Prostate gland (tissue), 2 donors: ENCODE measurements at regions of chr11 and their contacts with region 1.

Region 1: DNA sequence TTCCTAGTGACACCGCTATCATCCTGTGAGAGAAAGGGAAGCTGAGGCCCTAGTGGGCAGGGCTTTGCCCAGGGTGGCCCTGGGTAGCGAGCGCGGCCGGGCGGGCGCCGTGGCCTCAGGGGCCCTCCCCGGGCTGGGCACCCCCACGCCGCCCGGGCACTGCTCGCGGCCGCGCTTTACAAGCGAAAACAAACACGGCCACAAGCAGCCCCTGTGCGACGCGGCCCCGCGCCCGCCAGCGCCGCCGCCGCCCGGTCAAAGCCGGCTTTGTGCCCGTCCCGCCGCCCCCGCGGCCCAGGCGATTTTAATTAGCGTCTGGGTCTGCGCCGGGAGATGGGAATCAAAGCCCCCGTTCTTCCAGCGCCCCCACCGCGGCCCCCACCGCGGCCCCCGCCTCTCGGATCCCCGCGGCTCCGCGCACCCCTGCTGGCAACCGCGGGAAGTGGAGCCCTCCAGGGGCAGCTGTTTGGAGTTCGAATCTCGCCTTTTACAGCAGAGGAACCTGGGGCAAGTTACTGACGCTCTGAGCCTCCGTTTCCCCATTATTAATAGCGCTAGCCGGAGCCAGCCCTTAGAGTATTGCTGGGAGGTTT is 47.9 kb downstream of the CHRDL2 start:
- DNase-seq: peak; percentile 36
- H3K4me3 ChIP-seq: peak overlapping the region; percentile 27 to 38
- H3K27ac ChIP-seq: peak overlapping the region; percentile 18 to 76
- H3K4me1 ChIP-seq: peaks cover 10% of the 10 kb centered on the region
- H3K27me3 ChIP-seq: no peaks in the 10 kb centered on the region
- CTCF ChIP-seq: peak in 3 of 4 experiments; percentile 28 to 48 (median 32)
- POLR2A ChIP-seq: no peak

Region 2: GRCh38 chr11:74647404-74647803 is 36.0 kb before region 1 on chr11:
- intact Hi-C with region 1: loop called (anchors 5 kb)
- DNase-seq: no peak
- H3K4me3 ChIP-seq: no peak overlapping the region
- H3K27ac ChIP-seq: no peak overlapping the region
- H3K4me1 ChIP-seq: no peaks in the 10 kb centered on the region
- H3K27me3 ChIP-seq: no peaks in the 10 kb centered on the region
- CTCF ChIP-seq: no peak
- POLR2A ChIP-seq: no peak